MCF 10A (cell line): ENCODE measurements at regions of chr6 and their contacts with region 1.

Region 1: GRCh38 chr6:47787620-47788497 is 6.0 kb downstream of the OPN5 start:
- DNase-seq: peak; percentile 77
- H3K4me3 Mint-ChIP-seq: peak overlapping the region; percentile 52
- H3K27ac Mint-ChIP-seq: peak overlapping the region; percentile 76
- H3K4me1 Mint-ChIP-seq: peaks cover 16% of the 10 kb centered on the region
- H3K27me3 Mint-ChIP-seq: no peaks in the 10 kb centered on the region
- CTCF ChIP-seq: peak; percentile 97

Region 2: GRCh38 chr6:47897247-47897646 is 109.4 kb after region 1 on chr6:
- CTCF ChIA-PET with region 1: no interaction called
- POLR2A ChIA-PET with region 1: no interaction called
- intact Hi-C with region 1: no loop called
- DNase-seq: no peak
- H3K4me3 Mint-ChIP-seq: no peak overlapping the region
- H3K27ac Mint-ChIP-seq: no peak overlapping the region
- H3K4me1 Mint-ChIP-seq: no peaks in the 10 kb centered on the region
- H3K27me3 Mint-ChIP-seq: no peaks in the 10 kb centered on the region
- CTCF ChIP-seq: no peak

Region 3: DNA sequence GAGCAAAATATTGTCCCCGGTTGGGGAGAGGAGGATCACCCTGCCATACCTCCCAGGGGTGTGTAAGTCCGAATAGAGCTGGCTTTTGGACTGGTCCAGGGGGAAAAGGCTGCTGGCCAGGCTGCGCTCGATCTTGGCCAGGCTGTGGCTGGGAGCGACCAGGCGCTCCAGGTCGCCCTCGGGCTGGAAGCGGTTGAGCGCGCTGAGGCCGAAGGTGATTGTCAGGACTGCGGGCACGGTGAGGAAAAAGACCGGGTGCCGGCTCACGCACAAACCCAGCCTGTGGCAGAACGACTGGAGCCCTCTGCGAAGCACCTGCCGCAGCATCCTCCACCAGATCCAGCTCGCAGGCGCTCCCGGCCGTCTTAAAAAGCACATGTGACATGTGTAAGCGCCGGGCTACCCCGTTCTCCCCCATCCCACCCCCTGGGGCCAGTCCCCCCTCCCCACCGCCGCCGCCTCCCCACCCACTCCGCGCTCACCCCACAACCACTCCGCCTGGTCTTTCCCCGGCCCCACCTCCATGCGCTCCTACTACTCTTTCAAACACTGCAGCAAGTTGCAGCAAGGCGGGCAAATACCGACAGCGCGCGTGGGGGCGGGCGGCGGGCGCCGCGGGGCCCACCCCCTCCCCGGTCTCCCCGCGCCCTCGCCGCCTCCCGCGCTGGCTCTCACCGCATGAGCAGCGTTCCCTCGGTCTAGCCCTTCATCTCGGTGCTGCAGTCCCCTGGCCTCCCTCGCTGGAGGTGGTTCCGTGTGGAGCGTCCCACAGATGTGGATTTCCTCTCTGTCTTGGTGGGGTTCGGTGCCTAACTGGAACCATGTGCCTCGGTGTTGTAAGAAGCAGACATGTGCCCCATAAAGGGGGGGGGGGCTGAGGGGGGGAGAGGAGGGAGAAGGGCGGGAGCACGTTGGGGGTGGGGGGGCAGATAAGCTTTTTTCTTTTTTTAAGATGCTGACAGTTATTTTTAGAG is 280.7 kb after region 1 on chr6:
- CTCF ChIA-PET with region 1: interaction called, 5 read pairs
- POLR2A ChIA-PET with region 1: no interaction called
- intact Hi-C with region 1: loop called (anchors 5 kb)
- DNase-seq: no peak
- H3K4me3 Mint-ChIP-seq: peak overlapping the region; percentile 53
- H3K27ac Mint-ChIP-seq: no peak overlapping the region
- H3K4me1 Mint-ChIP-seq: peaks cover 6% of the 10 kb centered on the region
- H3K27me3 Mint-ChIP-seq: no peaks in the 10 kb centered on the region
- CTCF ChIP-seq: no peak

Region 4: GRCh38 chr6:48476257-48476656 is 688.4 kb after region 1 on chr6:
- CTCF ChIA-PET with region 1: interaction called, 3 read pairs
- POLR2A ChIA-PET with region 1: no interaction called
- intact Hi-C with region 1: loop called (anchors 1 kb)
- DNase-seq: peak; percentile 38
- H3K4me3 Mint-ChIP-seq: no peak overlapping the region
- H3K27ac Mint-ChIP-seq: no peak overlapping the region
- H3K4me1 Mint-ChIP-seq: no peaks in the 10 kb centered on the region
- H3K27me3 Mint-ChIP-seq: no peaks in the 10 kb centered on the region
- CTCF ChIP-seq: peak; percentile 27

Region 5: GRCh38 chr6:48826901-48827701 is 1039.2 kb after region 1 on chr6:
- CTCF ChIA-PET with region 1: interaction called, 4 read pairs
- POLR2A ChIA-PET with region 1: interaction called, 3 read pairs
- intact Hi-C with region 1: loop called (anchors 2 kb)
- DNase-seq: peak; percentile 98
- H3K4me3 Mint-ChIP-seq: peak overlapping the region; percentile 69
- H3K27ac Mint-ChIP-seq: peak overlapping the region; percentile 100
- H3K4me1 Mint-ChIP-seq: peaks cover 29% of the 10 kb centered on the region
- H3K27me3 Mint-ChIP-seq: no peaks in the 10 kb centered on the region
- CTCF ChIP-seq: no peak

Region 6: GRCh38 chr6:49423817-49424216 is 1636.0 kb after region 1 on chr6:
- CTCF ChIA-PET with region 1: interaction called, 15 read pairs
- POLR2A ChIA-PET with region 1: interaction called, 3 read pairs
- intact Hi-C with region 1: loop called (anchors 1 kb)
- DNase-seq: peak; percentile 23
- H3K4me3 Mint-ChIP-seq: no peak overlapping the region
- H3K27ac Mint-ChIP-seq: no peak overlapping the region
- H3K4me1 Mint-ChIP-seq: no peaks in the 10 kb centered on the region
- H3K27me3 Mint-ChIP-seq: no peaks in the 10 kb centered on the region
- CTCF ChIP-seq: peak; percentile 43